Activated naive CD4-positive, alpha-beta T cell treated with anti-CD3 and anti-CD28 coated beads, Interleukin-2, amount 10 ng/mL, durations not matched to agents 7 days and 5 days (primary cell): ENCODE measurements at regions of chr1 and their contacts with region 1.

Region 1: DNA sequence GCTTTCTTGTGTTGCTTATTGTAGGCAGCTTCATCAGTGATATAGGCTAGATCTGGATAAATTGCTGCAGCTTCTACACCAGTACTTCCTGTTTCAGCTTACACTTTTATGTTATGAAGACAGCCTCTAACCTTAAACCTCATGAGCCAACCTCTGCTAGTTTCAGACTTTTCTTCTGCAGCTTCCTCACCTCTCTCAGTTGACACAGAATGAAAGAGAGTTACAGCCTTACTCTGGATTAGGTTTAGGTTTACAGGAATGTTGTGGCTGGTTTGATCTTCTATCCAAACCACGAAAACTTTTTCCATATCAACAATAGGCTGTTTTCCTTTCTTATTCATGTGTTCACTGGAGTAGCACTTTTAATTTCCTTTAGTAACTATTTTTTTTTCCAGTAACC is 76.9 kb upstream of the RNPC3 start:
- DNase-seq: no peak
- H3K4me3 Mint-ChIP-seq: no peak overlapping the region
- H3K27ac Mint-ChIP-seq: no peak overlapping the region
- H3K4me1 Mint-ChIP-seq: peaks cover 6% of the 10 kb centered on the region
- H3K27me3 Mint-ChIP-seq: no peaks in the 10 kb centered on the region

Region 2: GRCh38 chr1:103461161-103462105 is 12.9 kb after region 1 on chr1:
- CTCF ChIA-PET with region 1: interaction called, 12 read pairs
- DNase-seq: no peak
- H3K4me3 Mint-ChIP-seq: no peak overlapping the region
- H3K27ac Mint-ChIP-seq: no peak overlapping the region
- H3K4me1 Mint-ChIP-seq: no peaks in the 10 kb centered on the region
- H3K27me3 Mint-ChIP-seq: no peaks in the 10 kb centered on the region

Region 3: DNA sequence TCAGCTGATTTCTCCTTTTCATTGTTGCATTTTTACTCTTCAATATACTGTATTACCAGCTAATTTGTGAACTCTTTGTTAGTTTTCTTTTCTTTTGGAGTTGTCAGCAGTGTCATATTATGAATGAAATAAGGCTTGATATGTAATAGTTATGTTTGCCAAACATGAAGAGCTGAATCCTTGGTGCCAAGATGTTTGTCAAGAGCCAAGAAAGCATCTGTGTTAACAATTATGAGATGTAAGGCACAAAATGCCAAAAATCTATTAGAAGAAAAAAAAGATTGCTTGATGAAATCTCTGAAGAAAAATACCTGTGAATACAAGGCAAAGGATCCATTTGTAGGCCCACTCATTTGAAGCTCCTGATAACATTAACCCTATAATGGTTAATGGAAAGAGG is 28.5 kb after region 1 on chr1:
- CTCF ChIA-PET with region 1: no interaction called
- DNase-seq: no peak
- H3K4me3 Mint-ChIP-seq: no peak overlapping the region
- H3K27ac Mint-ChIP-seq: no peak overlapping the region
- H3K4me1 Mint-ChIP-seq: no peaks in the 10 kb centered on the region
- H3K27me3 Mint-ChIP-seq: no peaks in the 10 kb centered on the region